ENCODE measurements at regions of chr2 and their contacts with region 1.

Region 1: DNA sequence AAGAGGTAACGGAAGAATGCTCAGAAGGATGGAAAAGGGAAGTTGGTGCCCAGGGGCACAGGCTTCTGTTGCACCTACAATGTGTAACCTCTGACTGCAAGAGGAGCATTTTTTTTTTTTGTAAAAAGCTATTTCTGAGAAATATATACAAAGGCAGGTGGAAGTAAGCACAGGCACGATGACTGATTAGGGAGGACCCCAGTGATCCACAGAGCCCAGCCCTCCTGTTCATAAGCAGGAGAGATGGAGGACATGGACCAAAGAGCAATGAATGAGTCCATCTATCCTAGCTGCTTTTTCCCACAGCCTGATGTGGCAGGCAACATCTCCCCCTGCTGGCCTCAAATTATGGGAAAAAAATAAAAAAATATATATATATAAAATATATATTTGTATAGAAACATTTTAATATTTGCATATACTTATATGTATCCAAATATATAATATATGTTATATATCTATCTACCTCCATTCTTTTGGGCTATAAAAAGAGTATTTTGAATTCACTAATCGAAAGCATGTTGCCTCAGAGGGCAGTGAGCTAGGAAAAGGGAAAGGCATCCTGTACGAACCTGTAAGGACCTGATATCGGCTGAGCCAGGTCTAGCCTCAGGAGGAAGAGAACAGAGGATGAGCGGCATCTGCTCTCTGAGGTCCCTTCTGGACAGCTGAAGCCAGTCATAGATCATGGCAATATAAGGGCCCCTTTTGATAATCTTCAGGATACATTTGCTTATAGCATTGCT is 166.0 kb upstream of the STK17B start:
- DNase-seq: peak; percentile 37
- H3K4me3 Mint-ChIP-seq: no peak overlapping the region
- H3K27ac Mint-ChIP-seq: no peak overlapping the region
- H3K4me1 Mint-ChIP-seq: peaks cover 8% of the 10 kb centered on the region
- H3K27me3 Mint-ChIP-seq: no peaks in the 10 kb centered on the region

Region 2: GRCh38 chr2:196131384-196131937 is 205.9 kb before region 1 on chr2:
- CTCF ChIA-PET with region 1: interaction called, 13 read pairs
- intact Hi-C with region 1: loop called (anchors 1 kb)
- DNase-seq: peak; percentile 70
- H3K4me3 Mint-ChIP-seq: no peak overlapping the region
- H3K27ac Mint-ChIP-seq: peak overlapping the region; percentile 70
- H3K4me1 Mint-ChIP-seq: peaks cover 12% of the 10 kb centered on the region
- H3K27me3 Mint-ChIP-seq: no peaks in the 10 kb centered on the region

Region 3: GRCh38 chr2:196200557-196200956 is 136.8 kb before region 1 on chr2:
- CTCF ChIA-PET with region 1: no interaction called
- intact Hi-C with region 1: no loop called
- DNase-seq: peak; percentile 72
- H3K4me3 Mint-ChIP-seq: no peak overlapping the region
- H3K27ac Mint-ChIP-seq: peak overlapping the region; percentile 56
- H3K4me1 Mint-ChIP-seq: peaks cover 52% of the 10 kb centered on the region
- H3K27me3 Mint-ChIP-seq: no peaks in the 10 kb centered on the region

Region 4: GRCh38 chr2:196322973-196323810 is 14.2 kb before region 1 on chr2:
- CTCF ChIA-PET with region 1: interaction called, 17 read pairs
- intact Hi-C with region 1: no loop called
- DNase-seq: no peak
- H3K4me3 Mint-ChIP-seq: no peak overlapping the region
- H3K27ac Mint-ChIP-seq: no peak overlapping the region
- H3K4me1 Mint-ChIP-seq: no peaks in the 10 kb centered on the region
- H3K27me3 Mint-ChIP-seq: no peaks in the 10 kb centered on the region